Naive thymus-derived CD4-positive, alpha-beta T cell (primary cell): ENCODE measurements at regions of chr3 and their contacts with region 1.

Region 1: GRCh38 chr3:81760924-81761903 is at the start of gene GBE1:
- DNase-seq: peak; percentile 85 to 95 (median 93)
- ATAC-seq: peak; percentile 93
- H3K4me3 ChIP-seq: peak within 1 kb of the TSS; percentile 63
- H3K4me3 Mint-ChIP-seq: peak within 1 kb of the TSS; percentile 82 to 99 (median 96)
- H3K27ac ChIP-seq: peak within 1 kb of the TSS; percentile 93
- H3K27ac Mint-ChIP-seq: peak within 1 kb of the TSS; percentile 95 to 99 (median 99)
- H3K4me1 ChIP-seq: peaks cover 16 to 18% of the 10 kb centered on the region in 2 donors
- H3K4me1 Mint-ChIP-seq: peaks cover 11 to 42% (median 33%) of the 10 kb centered on the region in 7 donors
- H3K27me3 ChIP-seq: no peaks in the 10 kb centered on the region
- H3K27me3 Mint-ChIP-seq: no peaks in the 10 kb centered on the region
- total RNA-seq, gene GBE1: 6.5 to 33.2 (median 8.3) TPM

Region 2: DNA sequence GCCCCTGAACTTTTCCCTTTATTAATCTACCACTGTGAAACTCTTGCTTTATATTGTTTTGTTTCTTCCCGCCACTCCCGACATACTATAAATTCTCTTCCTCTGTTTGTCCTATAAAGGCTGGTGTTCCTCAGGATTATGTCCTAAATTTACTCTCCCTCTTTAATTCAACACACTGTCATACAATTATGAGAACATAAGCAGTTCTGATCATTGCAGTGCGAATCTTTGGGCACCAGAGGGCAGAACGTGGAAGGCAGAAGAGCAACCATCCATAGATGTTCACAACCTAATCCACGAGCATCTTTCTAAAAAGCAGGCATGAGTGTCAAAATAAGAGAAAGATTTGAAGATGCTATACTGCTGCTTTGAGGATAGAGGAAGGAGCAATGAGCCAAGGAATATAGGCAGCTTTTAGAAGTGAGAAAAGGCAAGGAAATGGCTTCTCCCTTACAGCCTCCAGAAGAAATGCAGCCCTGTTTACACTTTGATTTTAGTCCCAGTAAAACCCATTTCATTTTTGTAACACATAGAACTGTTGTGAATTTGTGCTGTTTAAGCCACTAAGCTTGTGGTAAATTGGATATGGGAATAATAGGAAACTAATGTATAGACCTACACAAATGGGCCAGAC is 179.1 kb before region 1 on chr3:
- CTCF ChIA-PET with region 1: no interaction called
- POLR2A ChIA-PET with region 1: no interaction called
- intact Hi-C with region 1: loop called in 1 of 2 experiments (anchors 10 kb)
- DNase-seq: peak in 1 of 9 donors; percentile 3
- ATAC-seq: no peak
- H3K4me3 ChIP-seq: no peak overlapping the region
- H3K4me3 Mint-ChIP-seq: no peak overlapping the region
- H3K27ac ChIP-seq: no peak overlapping the region
- H3K27ac Mint-ChIP-seq: no peak overlapping the region
- H3K4me1 ChIP-seq: no peaks in the 10 kb centered on the region
- H3K4me1 Mint-ChIP-seq: no peaks in the 10 kb centered on the region
- H3K27me3 ChIP-seq: no peaks in the 10 kb centered on the region
- H3K27me3 Mint-ChIP-seq: no peaks in the 10 kb centered on the region

Region 3: GRCh38 chr3:81666493-81667121 is 94.6 kb before region 1 on chr3:
- CTCF ChIA-PET with region 1: no interaction called
- POLR2A ChIA-PET with region 1: no interaction called
- intact Hi-C with region 1: loop called in 1 of 2 experiments (anchors 10 kb)
- DNase-seq: peak in 5 of 9 donors; percentile 1 to 9 (median 3)
- ATAC-seq: no peak
- H3K4me3 ChIP-seq: no peak overlapping the region
- H3K4me3 Mint-ChIP-seq: no peak overlapping the region
- H3K27ac ChIP-seq: no peak overlapping the region
- H3K27ac Mint-ChIP-seq: no peak overlapping the region
- H3K4me1 ChIP-seq: no peaks in the 10 kb centered on the region
- H3K4me1 Mint-ChIP-seq: peaks cover 0 to 2% (median 0%) of the 10 kb centered on the region in 7 donors
- H3K27me3 ChIP-seq: no peaks in the 10 kb centered on the region
- H3K27me3 Mint-ChIP-seq: no peaks in the 10 kb centered on the region

Region 4: DNA sequence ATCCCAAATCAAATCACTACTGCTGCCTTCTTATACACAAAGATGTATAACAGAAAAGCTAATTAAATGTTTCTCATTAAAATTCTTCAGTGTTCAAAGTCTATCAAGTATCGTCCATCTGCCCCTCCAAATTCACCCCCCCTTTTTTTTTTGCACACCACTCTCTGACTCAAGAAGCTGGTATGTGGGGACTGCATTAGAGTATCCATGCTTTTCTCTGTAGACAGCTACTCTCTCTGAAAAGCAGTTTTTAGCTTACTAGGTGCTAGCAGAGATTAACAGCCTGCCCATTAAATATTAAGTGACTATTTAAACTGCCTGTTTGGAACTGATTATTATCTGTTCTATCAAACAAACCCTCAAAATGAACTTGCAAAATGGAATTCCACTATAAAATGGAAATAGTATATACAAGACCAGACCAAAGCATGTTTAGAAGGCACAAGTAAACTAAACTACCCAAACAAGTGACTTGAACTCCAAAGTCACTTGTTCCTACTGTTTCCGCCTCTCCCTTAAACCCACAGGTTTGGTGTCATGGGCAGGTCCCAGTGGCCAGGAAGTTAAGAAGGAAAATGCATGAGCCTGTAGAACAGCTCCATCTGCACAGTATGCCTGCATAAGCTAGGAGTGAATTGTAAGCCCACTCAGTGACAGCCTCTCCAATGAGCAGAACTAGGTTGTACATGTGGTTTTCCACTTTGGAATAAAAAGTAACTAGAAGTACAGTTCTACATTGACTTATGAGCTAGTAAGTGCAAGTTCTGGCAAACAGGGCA is 32.3 kb before region 1 on chr3:
- CTCF ChIA-PET with region 1: no interaction called
- POLR2A ChIA-PET with region 1: no interaction called
- intact Hi-C with region 1: no loop called
- DNase-seq: no peak
- ATAC-seq: no peak
- H3K4me3 ChIP-seq: no peak overlapping the region
- H3K4me3 Mint-ChIP-seq: no peak overlapping the region
- H3K27ac ChIP-seq: no peak overlapping the region
- H3K27ac Mint-ChIP-seq: no peak overlapping the region
- H3K4me1 ChIP-seq: no peaks in the 10 kb centered on the region
- H3K4me1 Mint-ChIP-seq: peaks cover 5 to 14% (median 8%) of the 10 kb centered on the region in 7 donors
- H3K27me3 ChIP-seq: no peaks in the 10 kb centered on the region
- H3K27me3 Mint-ChIP-seq: no peaks in the 10 kb centered on the region

Region 5: GRCh38 chr3:81864272-81864671 is 103.1 kb after region 1 on chr3:
- CTCF ChIA-PET with region 1: no interaction called
- POLR2A ChIA-PET with region 1: no interaction called
- intact Hi-C with region 1: no loop called
- DNase-seq: no peak
- ATAC-seq: no peak
- H3K4me3 ChIP-seq: no peak overlapping the region
- H3K4me3 Mint-ChIP-seq: no peak overlapping the region
- H3K27ac ChIP-seq: no peak overlapping the region
- H3K27ac Mint-ChIP-seq: no peak overlapping the region
- H3K4me1 ChIP-seq: no peaks in the 10 kb centered on the region
- H3K4me1 Mint-ChIP-seq: no peaks in the 10 kb centered on the region
- H3K27me3 ChIP-seq: no peaks in the 10 kb centered on the region
- H3K27me3 Mint-ChIP-seq: peaks cover 0 to 26% (median 19%) of the 10 kb centered on the region in 5 donors